Activated CD8-positive, alpha-beta memory T cell treated with anti-CD3 and anti-CD28 coated beads, Interleukin-2, amount 10 ng/mL, durations not matched to agents 7 days and 5 days (primary cell): ENCODE measurements at regions of chr12 and their contacts with region 1.

Region 1: GRCh38 chr12:113221181-113221997 is at the start of gene TPCN1:
- DNase-seq: peak; percentile 99
- ATAC-seq: peak; percentile 95
- H3K4me3 Mint-ChIP-seq: peak within 1 kb of the TSS; percentile 80
- H3K27ac Mint-ChIP-seq: peak within 1 kb of the TSS; percentile 88
- H3K4me1 Mint-ChIP-seq: peaks cover 36% of the 10 kb centered on the region
- H3K27me3 Mint-ChIP-seq: peaks cover 3% of the 10 kb centered on the region
- total RNA-seq, gene TPCN1: 21.4 to 23.3 TPM

Region 2: DNA sequence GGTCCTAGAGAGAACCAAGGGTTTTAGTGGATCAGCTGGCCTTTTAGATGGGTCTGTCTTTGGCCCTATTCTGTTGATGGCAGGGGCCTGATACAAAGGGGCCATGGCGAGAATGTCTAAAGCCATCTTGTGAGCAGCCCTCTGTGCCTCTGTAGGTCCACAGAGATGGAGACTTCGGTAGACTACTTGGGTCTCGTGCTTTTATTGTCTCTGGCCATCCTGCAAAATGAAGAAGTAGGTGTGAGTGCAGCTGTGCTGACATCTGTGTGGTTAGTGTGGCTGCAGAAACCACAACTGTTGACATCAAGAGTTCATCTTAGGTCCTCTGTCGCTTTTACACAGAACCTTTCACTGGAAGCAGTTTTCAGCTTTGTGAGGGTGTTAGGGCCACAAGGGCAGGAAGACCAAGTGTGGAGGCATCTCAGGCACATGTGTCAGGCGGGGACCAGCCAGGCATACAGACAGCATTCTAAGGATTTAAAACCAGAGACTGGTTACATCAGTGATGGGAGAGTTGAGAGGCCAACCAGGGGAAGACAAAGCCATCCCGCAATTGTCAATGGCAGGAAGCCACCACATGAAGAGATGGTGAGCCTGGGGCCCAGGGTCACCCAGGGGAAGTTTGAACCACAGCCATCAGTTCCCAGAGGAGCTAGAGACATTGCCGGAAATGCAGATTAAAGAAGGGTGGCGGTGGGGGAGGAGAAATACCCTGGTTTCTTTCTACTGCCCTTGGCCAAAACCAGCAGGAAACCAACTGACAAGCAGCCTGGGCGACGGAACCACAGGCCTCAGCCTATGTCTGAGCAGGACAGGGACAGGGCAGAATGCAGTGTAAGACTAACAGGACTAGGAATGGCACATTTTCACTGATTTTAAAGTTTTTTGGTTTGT is 13.1 kb before region 1 on chr12:
- CTCF ChIA-PET with region 1: interaction called, 31 read pairs
- DNase-seq: peak; percentile 94
- ATAC-seq: peak; percentile 85
- H3K4me3 Mint-ChIP-seq: peak overlapping the region; percentile 37
- H3K27ac Mint-ChIP-seq: peak overlapping the region; percentile 90
- H3K4me1 Mint-ChIP-seq: peaks cover 73% of the 10 kb centered on the region
- H3K27me3 Mint-ChIP-seq: no peaks in the 10 kb centered on the region

Region 3: DNA sequence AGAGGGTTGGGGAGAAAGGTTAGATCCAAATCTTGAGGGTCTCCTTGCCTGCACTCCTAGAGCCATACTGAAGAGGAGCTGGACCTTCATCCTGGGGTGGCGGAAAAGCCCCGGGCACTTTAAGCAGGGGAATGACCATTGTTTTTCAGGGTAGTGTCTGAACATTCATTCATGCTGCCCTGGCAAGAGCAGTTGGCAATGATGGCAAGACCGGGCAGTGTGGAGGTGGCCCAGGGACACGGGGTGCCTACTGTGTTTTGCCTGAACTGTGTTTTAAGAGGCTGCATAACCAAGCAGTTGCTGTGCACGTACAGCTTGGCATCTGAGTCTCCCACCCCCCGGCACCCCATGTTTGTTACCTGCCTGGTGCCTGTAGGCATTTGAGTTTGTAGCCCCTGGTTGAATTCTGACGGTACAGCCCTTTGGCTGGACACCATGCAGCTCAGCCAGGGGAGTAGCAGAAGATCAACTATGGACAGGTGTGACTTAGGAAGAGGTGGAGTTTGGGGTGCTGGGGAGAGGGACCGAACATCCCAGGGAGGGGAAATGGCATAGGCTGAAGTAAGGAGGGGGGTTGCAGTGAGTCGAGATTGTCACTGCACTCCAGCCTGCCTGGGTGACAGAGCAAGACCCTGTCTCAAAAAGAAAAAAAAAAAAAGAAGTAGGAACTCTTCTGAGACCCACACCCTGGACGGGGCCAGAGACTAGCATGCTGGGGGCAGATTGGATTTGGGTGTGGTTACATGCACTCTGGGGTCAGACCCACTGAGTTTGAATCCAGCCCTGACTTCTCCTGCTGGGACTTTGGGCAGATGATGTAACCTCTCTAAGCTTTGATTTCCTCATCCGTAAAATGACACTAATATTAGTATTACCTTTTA is 14.8 kb after region 1 on chr12:
- CTCF ChIA-PET with region 1: interaction called, 11 read pairs
- DNase-seq: no peak
- ATAC-seq: no peak
- H3K4me3 Mint-ChIP-seq: no peak overlapping the region
- H3K27ac Mint-ChIP-seq: no peak overlapping the region
- H3K4me1 Mint-ChIP-seq: peaks cover 13% of the 10 kb centered on the region
- H3K27me3 Mint-ChIP-seq: no peaks in the 10 kb centered on the region

Region 4: DNA sequence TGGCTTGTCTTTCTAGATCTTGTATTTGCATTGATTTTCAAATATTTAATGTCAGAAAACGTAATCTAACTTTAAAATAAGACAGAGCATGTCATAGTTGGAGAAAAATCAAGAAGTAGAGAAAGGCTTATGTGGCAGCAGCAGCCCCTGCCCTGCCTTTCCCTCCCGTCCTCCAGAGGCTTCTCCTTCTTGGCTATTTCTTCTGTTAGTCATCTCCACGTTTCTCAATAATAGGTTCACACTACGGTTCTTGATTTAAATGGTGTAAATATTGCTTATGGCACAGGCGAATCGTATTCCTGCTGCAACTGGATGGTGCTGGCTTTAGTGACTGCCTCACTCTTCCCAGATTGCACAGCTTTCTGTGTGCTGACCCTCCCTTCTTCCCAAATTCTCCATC is 70.7 kb after region 1 on chr12:
- CTCF ChIA-PET with region 1: no interaction called
- DNase-seq: no peak
- ATAC-seq: no peak
- H3K4me3 Mint-ChIP-seq: no peak overlapping the region
- H3K27ac Mint-ChIP-seq: no peak overlapping the region
- H3K4me1 Mint-ChIP-seq: no peaks in the 10 kb centered on the region
- H3K27me3 Mint-ChIP-seq: no peaks in the 10 kb centered on the region

Region 5: DNA sequence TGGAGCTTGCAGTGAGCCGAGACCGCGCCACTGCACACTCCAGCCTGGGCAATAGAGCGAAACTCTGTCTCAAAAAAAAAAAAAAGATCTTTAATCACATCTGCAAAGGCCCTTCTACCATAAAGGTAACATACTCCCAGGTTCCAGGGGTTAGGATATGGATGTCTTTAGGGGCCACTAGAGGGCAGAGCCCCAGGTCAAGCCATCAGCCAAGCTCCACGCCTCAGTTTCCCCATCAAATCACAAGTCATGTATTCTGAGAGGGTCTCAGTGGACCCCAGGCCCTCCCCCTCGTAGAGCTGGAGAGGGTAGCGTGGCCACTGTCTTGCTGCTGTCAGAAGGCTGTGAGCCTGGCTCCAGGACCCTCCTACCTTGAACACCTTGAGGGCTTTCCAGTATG is 94.8 kb after region 1 on chr12:
- CTCF ChIA-PET with region 1: no interaction called
- DNase-seq: no peak
- ATAC-seq: no peak
- H3K4me3 Mint-ChIP-seq: no peak overlapping the region
- H3K27ac Mint-ChIP-seq: no peak overlapping the region
- H3K4me1 Mint-ChIP-seq: no peaks in the 10 kb centered on the region
- H3K27me3 Mint-ChIP-seq: no peaks in the 10 kb centered on the region